Activated naive CD4-positive, alpha-beta T cell treated with anti-CD3 and anti-CD28 coated beads for 36 hours (primary cell): ENCODE measurements at regions of chr1 and their contacts with region 1.

Region 1: DNA sequence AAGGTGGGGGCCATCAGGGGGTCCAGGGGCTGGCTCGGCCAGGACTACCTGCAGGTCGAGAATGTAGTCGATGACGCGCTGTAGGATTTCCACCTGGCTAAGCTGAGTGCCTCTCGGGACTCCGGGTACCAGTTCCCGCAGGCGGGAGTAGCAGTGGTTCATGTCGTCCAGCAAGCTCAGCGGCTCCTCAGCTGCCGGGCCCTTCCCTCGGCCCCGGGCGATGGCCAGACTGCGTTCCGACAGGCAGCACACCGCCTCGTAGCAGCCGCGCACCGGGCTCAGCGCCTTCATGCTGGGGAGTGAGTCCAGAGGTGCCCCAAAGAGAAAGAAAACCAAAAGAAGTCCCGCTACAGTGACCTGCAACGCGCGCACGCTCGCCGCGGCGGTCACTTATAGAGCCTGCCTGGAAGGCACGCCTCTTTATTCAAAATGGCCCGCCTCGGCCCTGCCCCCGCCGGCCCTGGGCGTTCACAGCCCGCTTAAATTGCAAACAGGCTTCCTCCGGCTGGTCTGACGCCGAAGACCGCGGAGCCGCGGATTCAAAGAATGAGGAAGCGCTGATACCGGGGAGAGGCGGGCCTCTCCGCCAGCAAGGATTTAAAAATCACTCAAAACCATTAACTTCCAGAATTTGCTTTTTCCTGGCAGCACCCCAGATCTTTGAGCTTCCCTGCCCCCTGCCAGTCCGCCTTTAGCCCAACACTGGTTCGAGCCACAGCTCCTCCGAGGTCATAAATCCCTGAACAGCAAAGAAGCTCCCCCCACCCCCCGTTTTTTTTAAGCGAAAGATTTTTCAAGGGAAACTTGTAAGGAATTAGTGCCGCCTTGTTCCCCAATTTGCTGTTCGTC is at the start of gene ID3:
- DNase-seq: peak; percentile 94
- H3K4me3 Mint-ChIP-seq: peak within 1 kb of the TSS; percentile 82
- H3K27ac Mint-ChIP-seq: peak within 1 kb of the TSS; percentile 84
- H3K4me1 Mint-ChIP-seq: peaks cover 62% of the 10 kb centered on the region
- H3K27me3 Mint-ChIP-seq: peaks cover 3% of the 10 kb centered on the region
- total RNA-seq, gene ID3: 69.5 to 74.6 TPM

Region 2: GRCh38 chr1:23362218-23362713 is 197.1 kb before region 1 on chr1:
- CTCF ChIA-PET with region 1: no interaction called
- intact Hi-C with region 1: no loop called
- DNase-seq: peak; percentile 27
- H3K4me3 Mint-ChIP-seq: no peak overlapping the region
- H3K27ac Mint-ChIP-seq: no peak overlapping the region
- H3K4me1 Mint-ChIP-seq: peaks cover 9% of the 10 kb centered on the region
- H3K27me3 Mint-ChIP-seq: no peaks in the 10 kb centered on the region

Region 3: GRCh38 chr1:23577056-23578004 is 18.0 kb after region 1 on chr1:
- CTCF ChIA-PET with region 1: interaction called, 7 read pairs
- intact Hi-C with region 1: loop called (anchors 1 kb)
- DNase-seq: peak; percentile 77
- H3K4me3 Mint-ChIP-seq: peak overlapping the region; percentile 32
- H3K27ac Mint-ChIP-seq: peak overlapping the region; percentile 78
- H3K4me1 Mint-ChIP-seq: peaks cover 29% of the 10 kb centered on the region
- H3K27me3 Mint-ChIP-seq: no peaks in the 10 kb centered on the region

Region 4: GRCh38 chr1:23613191-23614031 is 54.1 kb after region 1 on chr1:
- CTCF ChIA-PET with region 1: interaction called, 8 read pairs
- intact Hi-C with region 1: loop called (anchors 2 kb)
- DNase-seq: peak; percentile 91
- H3K4me3 Mint-ChIP-seq: peak overlapping the region; percentile 14
- H3K27ac Mint-ChIP-seq: peak overlapping the region; percentile 88
- H3K4me1 Mint-ChIP-seq: peaks cover 71% of the 10 kb centered on the region
- H3K27me3 Mint-ChIP-seq: no peaks in the 10 kb centered on the region

Region 5: GRCh38 chr1:23627069-23627735 is 67.8 kb after region 1 on chr1:
- CTCF ChIA-PET with region 1: interaction called, 228 read pairs
- intact Hi-C with region 1: loop called (anchors 1 kb)
- DNase-seq: peak; percentile 63
- H3K4me3 Mint-ChIP-seq: peak overlapping the region; percentile 82
- H3K27ac Mint-ChIP-seq: peak overlapping the region; percentile 83
- H3K4me1 Mint-ChIP-seq: peaks cover 53% of the 10 kb centered on the region
- H3K27me3 Mint-ChIP-seq: no peaks in the 10 kb centered on the region

Region 6: GRCh38 chr1:24150234-24151174 is 591.1 kb after region 1 on chr1:
- CTCF ChIA-PET with region 1: no interaction called
- intact Hi-C with region 1: no loop called
- DNase-seq: peak; percentile 95
- H3K4me3 Mint-ChIP-seq: peak overlapping the region; percentile 63
- H3K27ac Mint-ChIP-seq: no peak overlapping the region
- H3K4me1 Mint-ChIP-seq: peaks cover 18% of the 10 kb centered on the region
- H3K27me3 Mint-ChIP-seq: peaks cover 32% of the 10 kb centered on the region

Region 7: GRCh38 chr1:24642481-24643361 is 1083.4 kb after region 1 on chr1 and contains the start of gene SRRM1:
- CTCF ChIA-PET with region 1: no interaction called
- intact Hi-C with region 1: loop called (anchors 10 kb)
- DNase-seq: peak; percentile 100
- H3K4me3 Mint-ChIP-seq: peak within 1 kb of the TSS; percentile 83
- H3K27ac Mint-ChIP-seq: peak within 1 kb of the TSS; percentile 98
- H3K4me1 Mint-ChIP-seq: peaks cover 48% of the 10 kb centered on the region
- H3K27me3 Mint-ChIP-seq: no peaks in the 10 kb centered on the region
- total RNA-seq, gene SRRM1: 226 to 235 TPM